SK-N-SH (cell line): ENCODE measurements at regions of chr3 and their contacts with region 1.

Region 1: GRCh38 chr3:128112357-128112968 is 11.1 kb downstream of the RUVBL1 start:
- DNase-seq: peak; percentile 78
- H3K4me3 ChIP-seq: no peak overlapping the region
- H3K27ac ChIP-seq: peak overlapping the region; percentile 93 to 97
- H3K4me1 ChIP-seq: peaks cover 24 to 51% of the 10 kb centered on the region in 2 experiments
- H3K27me3 ChIP-seq: no peaks in the 10 kb centered on the region
- CTCF ChIP-seq: peak; percentile 18; the same call in 1 of the 2 replicates
- EP300 ChIP-seq: peak; percentile 77 to 92
- RAD21 ChIP-seq: peak; percentile 10; the same call in 1 of the 2 replicates

Region 2: DNA sequence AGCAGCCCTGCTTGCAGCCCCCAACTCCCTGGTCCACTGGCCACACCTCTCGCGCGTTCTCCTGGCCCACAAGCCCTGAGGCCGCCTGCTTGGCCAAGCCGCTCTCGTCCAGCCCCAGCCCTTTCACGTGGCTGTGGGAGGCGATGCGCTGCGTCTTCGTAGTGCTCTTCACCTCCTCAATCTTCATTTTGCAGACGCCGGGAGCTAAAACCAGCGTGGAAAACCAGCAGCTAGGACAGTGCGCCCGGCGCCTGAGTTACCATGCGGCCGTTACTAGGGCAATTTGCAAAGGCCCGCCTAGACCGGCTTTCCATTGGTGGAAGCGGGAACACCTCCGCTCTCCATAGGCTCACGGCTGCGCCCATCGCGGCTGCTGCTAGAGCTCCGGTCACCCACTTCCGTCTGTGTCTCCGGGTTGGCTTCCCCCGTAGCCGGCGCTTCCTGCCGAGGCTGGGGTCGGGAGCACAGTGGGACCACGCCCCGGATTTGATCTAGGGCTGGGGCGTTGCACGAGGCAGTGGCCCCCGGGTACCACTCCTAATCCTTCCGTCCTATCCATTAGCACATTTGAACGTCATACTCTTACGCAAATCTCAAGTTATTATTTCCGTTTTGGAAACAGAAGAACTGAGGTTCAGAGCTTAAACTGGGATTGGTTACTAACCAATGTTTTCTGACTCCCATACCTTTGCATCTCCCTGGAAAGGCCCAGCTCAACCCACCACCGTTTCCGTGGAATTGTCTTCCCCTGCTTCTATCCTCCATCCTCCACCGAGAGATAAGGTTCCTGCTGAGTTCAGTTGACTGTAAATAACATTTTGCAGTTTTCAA is 11.3 kb after region 1 on chr3 and contains the start of gene RUVBL1:
- CTCF ChIA-PET with region 1: interaction called, 11 read pairs
- POLR2A ChIA-PET with region 1: interaction called, 5 read pairs
- DNase-seq: peak; percentile 96
- H3K4me3 ChIP-seq: peak within 1 kb of the TSS; percentile 98 to 99
- H3K27ac ChIP-seq: peak within 1 kb of the TSS; percentile 82 to 93
- H3K4me1 ChIP-seq: peaks cover 0 to 14% of the 10 kb centered on the region in 2 experiments; a peak in 2 of 4 replicates
- H3K27me3 ChIP-seq: no peaks in the 10 kb centered on the region
- CTCF ChIP-seq: no peak
- EP300 ChIP-seq: no peak
- RAD21 ChIP-seq: no peak
- polyA plus RNA-seq, gene RUVBL1: 140 and 145 TPM in 2 replicates